ENCODE measurements at regions of chr20 and their contacts with region 1.

Region 1: DNA sequence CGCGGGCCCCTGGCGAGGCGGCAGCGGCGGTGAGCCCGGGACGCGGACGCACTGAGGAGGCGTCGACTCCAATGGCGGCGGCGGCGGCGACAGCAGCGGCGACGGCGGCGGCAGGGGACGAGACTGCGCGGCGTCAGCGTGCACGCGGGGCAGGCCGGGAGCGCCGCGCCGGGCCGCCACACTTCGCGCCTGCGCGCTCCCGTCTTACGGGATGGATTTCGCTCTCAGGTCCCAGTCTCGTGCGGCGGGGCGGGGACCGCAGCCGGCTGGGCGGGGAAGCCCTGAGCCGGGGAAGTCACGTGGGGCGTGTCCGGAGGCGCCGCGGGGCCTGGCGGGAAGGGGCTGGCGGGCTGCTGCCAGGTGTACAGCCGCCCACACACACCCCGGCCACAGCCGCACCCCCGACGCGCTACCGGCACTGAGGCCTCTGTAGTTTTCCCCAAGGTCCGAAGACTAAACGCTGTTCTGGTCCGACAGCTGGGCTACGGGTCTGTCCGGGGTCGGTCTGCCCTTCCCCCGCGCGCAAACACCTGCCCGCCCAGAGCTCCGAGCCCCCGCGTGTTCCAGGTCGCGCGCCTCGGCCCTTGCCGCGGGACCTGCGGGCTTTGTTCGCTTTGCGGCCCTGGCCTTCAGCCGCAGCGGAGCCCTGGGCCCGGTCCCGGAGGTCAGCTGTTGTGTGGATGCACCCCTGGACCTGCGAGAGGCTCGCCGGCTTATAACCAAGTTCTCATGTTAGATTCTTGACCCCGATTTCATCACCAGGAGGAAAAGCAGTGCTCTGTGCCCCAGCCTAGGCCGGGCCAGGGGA is at the start of gene YTHDF1:
- DNase-seq: peak; percentile 98
- H3K4me3 ChIP-seq: peak within 1 kb of the TSS; percentile 100
- H3K27ac ChIP-seq: peak within 1 kb of the TSS; percentile 62
- H3K4me1 ChIP-seq: peaks cover 23% of the 10 kb centered on the region
- CTCF ChIP-seq: no peak
- total RNA-seq, gene YTHDF1: 26.7 and 31.3 TPM in 2 replicates

Region 2: GRCh38 chr20:63272584-63273579 is 56.6 kb after region 1 on chr20 and contains the start of gene ARFGAP1:
- CTCF ChIA-PET with region 1: no interaction called
- POLR2A ChIA-PET with region 1: no interaction called
- intact Hi-C with region 1: loop called (anchors 5 kb)
- DNase-seq: peak; percentile 92
- H3K4me3 ChIP-seq: peak within 1 kb of the TSS; percentile 100
- H3K27ac ChIP-seq: peak within 1 kb of the TSS; percentile 4
- H3K4me1 ChIP-seq: peaks cover 17% of the 10 kb centered on the region
- CTCF ChIP-seq: no peak
- total RNA-seq, gene ARFGAP1: 50.4 and 57.9 TPM in 2 replicates